Naive thymus-derived CD4-positive, alpha-beta T cell (primary cell): ENCODE measurements at regions of chr2 and their contacts with region 1.

Region 1: GRCh38 chr2:197515739-197516392 is at the start of gene MOB4:
- DNase-seq: peak; percentile 87 to 98 (median 92)
- ATAC-seq: peak; percentile 97
- H3K4me3 ChIP-seq: peak within 1 kb of the TSS; percentile 75
- H3K4me3 Mint-ChIP-seq: peak within 1 kb of the TSS; percentile 85 to 99 (median 98)
- H3K27ac ChIP-seq: peak within 1 kb of the TSS; percentile 86
- H3K27ac Mint-ChIP-seq: peak within 1 kb of the TSS; percentile 88 to 99 (median 95)
- H3K4me1 ChIP-seq: peaks cover 10 to 12% of the 10 kb centered on the region in 2 donors
- H3K4me1 Mint-ChIP-seq: peaks cover 28 to 49% (median 40%) of the 10 kb centered on the region in 7 donors
- H3K27me3 ChIP-seq: no peaks in the 10 kb centered on the region
- H3K27me3 Mint-ChIP-seq: no peaks in the 10 kb centered on the region
- total RNA-seq, gene MOB4: 16.1 to 22.5 (median 17.9) TPM

Region 2: DNA sequence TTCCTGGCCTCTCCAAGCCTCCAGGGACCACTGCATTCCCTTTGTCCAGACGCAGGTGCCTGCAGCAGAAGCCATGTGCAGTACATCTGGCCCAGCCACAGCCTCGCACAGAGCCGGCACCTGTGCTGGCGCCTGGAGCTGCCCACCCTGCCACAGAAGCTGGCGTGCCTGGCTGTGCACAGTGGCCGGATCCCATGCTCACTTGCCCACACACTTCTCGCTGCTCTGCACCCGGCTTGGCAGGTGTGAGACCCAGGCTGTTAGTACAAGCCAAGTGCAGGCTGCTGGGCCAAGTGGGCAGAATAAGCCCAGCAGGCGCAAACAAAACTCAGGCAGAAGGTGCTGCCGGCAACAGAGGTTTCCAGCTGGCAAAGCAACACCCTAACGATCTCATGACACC is 1000.8 kb before region 1 on chr2:
- CTCF ChIA-PET with region 1: no interaction called
- POLR2A ChIA-PET with region 1: no interaction called
- intact Hi-C with region 1: no loop called
- DNase-seq: no peak
- ATAC-seq: no peak
- H3K4me3 ChIP-seq: no peak overlapping the region
- H3K4me3 Mint-ChIP-seq: no peak overlapping the region
- H3K27ac ChIP-seq: no peak overlapping the region
- H3K27ac Mint-ChIP-seq: no peak overlapping the region
- H3K4me1 ChIP-seq: no peaks in the 10 kb centered on the region
- H3K4me1 Mint-ChIP-seq: no peaks in the 10 kb centered on the region
- H3K27me3 ChIP-seq: no peaks in the 10 kb centered on the region
- H3K27me3 Mint-ChIP-seq: peaks cover 0 to 26% (median 15%) of the 10 kb centered on the region in 5 donors

Region 3: DNA sequence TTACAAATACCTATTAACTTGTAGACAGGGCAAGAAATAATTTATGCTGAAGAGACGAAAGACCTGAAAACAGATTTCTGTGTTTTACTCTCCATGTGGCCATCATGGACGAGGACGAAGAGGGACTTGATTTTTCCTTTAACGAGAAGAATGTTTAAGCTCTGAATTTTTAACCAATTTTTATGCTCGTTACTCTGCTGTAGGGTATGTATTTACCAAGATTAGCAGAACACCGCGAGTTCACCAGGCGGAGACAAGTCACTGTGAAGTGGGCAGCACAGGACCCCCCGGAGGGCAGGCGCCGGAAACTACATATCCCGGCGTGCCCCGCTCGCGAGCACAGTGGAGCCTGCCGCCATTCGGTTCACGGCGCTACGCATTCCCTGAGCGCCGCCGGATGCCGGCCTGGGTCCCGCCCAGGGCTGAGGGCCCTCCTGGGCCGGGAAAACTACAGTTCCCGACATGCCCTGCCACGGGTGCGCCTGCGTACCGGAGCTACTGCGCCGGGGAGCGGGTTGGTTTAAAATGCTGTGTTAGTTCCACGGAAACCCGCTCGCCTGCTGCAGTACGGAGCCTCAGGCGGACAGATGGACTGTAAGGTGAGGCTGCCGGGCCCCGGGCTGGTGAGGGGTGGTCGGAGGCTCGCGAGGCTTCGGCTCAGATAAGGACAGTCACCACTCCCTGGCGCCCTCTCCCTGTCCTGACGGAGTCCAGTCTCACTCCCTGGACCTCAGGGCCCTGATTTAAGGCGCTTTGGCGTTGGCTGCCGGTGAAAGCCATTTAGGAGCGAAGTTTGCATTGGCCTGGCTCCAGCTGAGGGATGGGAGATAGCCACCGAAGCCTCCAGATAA is 876.5 kb before region 1 on chr2 and contains the start of gene CCDC150:
- CTCF ChIA-PET with region 1: no interaction called
- POLR2A ChIA-PET with region 1: no interaction called
- intact Hi-C with region 1: loop called (anchors 1 to 5 kb)
- DNase-seq: peak; percentile 88 to 95 (median 94)
- ATAC-seq: peak; percentile 100
- H3K4me3 ChIP-seq: peak within 1 kb of the TSS; percentile 86
- H3K4me3 Mint-ChIP-seq: peak within 1 kb of the TSS; percentile 82 to 92 (median 88)
- H3K27ac ChIP-seq: peak within 1 kb of the TSS; percentile 48
- H3K27ac Mint-ChIP-seq: peak within 1 kb of the TSS in 8 of 9 donors; percentile 30 to 78 (median 43)
- H3K4me1 ChIP-seq: peaks cover 7 to 8% of the 10 kb centered on the region in 2 donors
- H3K4me1 Mint-ChIP-seq: peaks cover 4 to 26% (median 19%) of the 10 kb centered on the region in 7 donors
- H3K27me3 ChIP-seq: no peaks in the 10 kb centered on the region
- H3K27me3 Mint-ChIP-seq: peaks cover 0 to 15% (median 0%) of the 10 kb centered on the region in 5 donors
- total RNA-seq, gene CCDC150: 0.13 to 11.2 (median 1.2) TPM

Region 4: DNA sequence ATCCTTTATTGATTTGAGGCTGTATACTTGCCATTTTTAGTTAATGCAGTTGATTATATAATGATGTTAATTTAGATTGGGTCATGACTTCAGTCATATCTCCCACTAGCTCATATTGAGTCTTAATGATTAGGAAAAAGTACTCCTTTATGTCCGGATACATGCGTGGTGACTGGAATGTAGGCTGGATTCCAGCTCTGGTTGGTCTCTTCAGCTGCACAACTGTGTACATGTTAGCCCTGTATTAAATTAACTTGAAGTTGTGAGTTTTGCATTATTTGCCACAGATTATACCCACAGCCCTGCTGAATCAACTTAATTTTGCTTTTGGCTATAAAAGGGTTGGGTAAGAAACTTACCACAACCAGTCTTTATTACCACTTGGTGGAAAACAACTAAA is 22.5 kb after region 1 on chr2:
- CTCF ChIA-PET with region 1: no interaction called
- POLR2A ChIA-PET with region 1: interaction called, 3 read pairs
- intact Hi-C with region 1: loop called in 1 of 2 experiments (anchors 2 kb)
- DNase-seq: no peak
- ATAC-seq: no peak
- H3K4me3 ChIP-seq: no peak overlapping the region
- H3K4me3 Mint-ChIP-seq: no peak overlapping the region
- H3K27ac ChIP-seq: no peak overlapping the region
- H3K27ac Mint-ChIP-seq: peak overlapping the region in 7 of 9 donors; percentile 22 to 80 (median 62)
- H3K4me1 ChIP-seq: peaks cover 0 to 5% of the 10 kb centered on the region in 2 donors
- H3K4me1 Mint-ChIP-seq: peaks cover 14 to 55% (median 44%) of the 10 kb centered on the region in 7 donors
- H3K27me3 ChIP-seq: no peaks in the 10 kb centered on the region
- H3K27me3 Mint-ChIP-seq: no peaks in the 10 kb centered on the region

Region 5: GRCh38 chr2:197599285-197599965 is 83.6 kb after region 1 on chr2:
- CTCF ChIA-PET with region 1: no interaction called
- POLR2A ChIA-PET with region 1: no interaction called
- intact Hi-C with region 1: loop called in 1 of 2 experiments (anchors 1 kb)
- DNase-seq: peak in 7 of 9 donors; percentile 28 to 67 (median 55)
- ATAC-seq: peak; percentile 92
- H3K4me3 ChIP-seq: no peak overlapping the region
- H3K4me3 Mint-ChIP-seq: peak overlapping the region in 8 of 10 donors; percentile 23 to 74 (median 66)
- H3K27ac ChIP-seq: no peak overlapping the region
- H3K27ac Mint-ChIP-seq: peak overlapping the region in 1 of 9 donors; percentile 56
- H3K4me1 ChIP-seq: no peaks in the 10 kb centered on the region
- H3K4me1 Mint-ChIP-seq: peaks cover 4 to 6% (median 6%) of the 10 kb centered on the region in 7 donors
- H3K27me3 ChIP-seq: no peaks in the 10 kb centered on the region
- H3K27me3 Mint-ChIP-seq: peaks cover 6 to 30% (median 19%) of the 10 kb centered on the region in 5 donors